ENCODE measurements at regions of chr20 and their contacts with region 1.

Region 1: DNA sequence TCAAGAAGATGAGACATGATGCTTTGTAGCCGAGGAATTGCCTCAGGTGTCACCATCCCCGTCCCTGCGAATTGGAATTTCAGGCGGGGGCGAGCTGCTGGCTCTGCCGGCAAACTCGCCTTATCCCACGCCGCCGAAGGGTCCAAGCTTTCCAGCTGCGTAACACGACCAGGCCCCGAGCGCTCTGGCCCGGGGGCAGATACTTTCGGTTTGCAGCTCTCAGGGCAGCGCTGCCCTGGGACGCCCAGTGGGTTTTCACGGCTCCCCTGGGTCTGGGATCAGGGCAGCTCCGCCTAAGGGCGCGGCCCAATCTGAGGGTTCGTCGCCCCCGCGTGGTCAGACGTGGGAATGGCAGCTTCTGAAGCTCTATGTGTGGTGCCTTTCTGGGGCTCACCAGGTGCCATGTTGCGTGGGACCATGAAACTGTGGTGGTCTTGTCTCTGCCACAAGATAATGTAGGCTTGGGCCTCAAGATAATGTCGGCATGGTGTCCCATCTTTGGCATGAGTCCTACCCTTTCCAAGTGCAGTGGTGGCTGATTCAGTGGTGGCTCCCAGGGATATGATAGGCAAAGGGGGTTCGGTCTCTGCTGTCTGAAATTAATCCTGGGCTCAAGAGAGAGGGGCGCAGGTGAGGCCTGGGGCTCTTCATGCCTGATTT is 20.9 kb downstream of the PIGT start:
- DNase-seq: peak; percentile 93
- H3K4me3 ChIP-seq: peak overlapping the region; percentile 47 to 80 (median 52)
- H3K27ac ChIP-seq: peak overlapping the region; percentile 78 to 86 (median 80)
- H3K4me1 ChIP-seq: peaks cover 0 to 13% (median 9%) of the 10 kb centered on the region in 4 donors
- H3K27me3 ChIP-seq: no peaks in the 10 kb centered on the region
- CTCF ChIP-seq: peak; percentile 92 to 98 (median 96)
- EP300 ChIP-seq: no peak
- POLR2A ChIP-seq: peak; percentile 38

Region 2: GRCh38 chr20:45311589-45312211 is 125.2 kb before region 1 on chr20:
- in situ Hi-C with region 1: loop called (anchors 5 to 25 kb)
- intact Hi-C with region 1: loop called (anchors 5 kb)
- DNase-seq: peak; percentile 68
- H3K4me3 ChIP-seq: no peak overlapping the region
- H3K27ac ChIP-seq: no peak overlapping the region
- H3K4me1 ChIP-seq: peaks cover 0 to 13% (median 4%) of the 10 kb centered on the region in 4 donors
- H3K27me3 ChIP-seq: peaks cover 62% of the 10 kb centered on the region
- CTCF ChIP-seq: peak; percentile 65 to 86 (median 75)
- EP300 ChIP-seq: no peak
- POLR2A ChIP-seq: no peak

Region 3: DNA sequence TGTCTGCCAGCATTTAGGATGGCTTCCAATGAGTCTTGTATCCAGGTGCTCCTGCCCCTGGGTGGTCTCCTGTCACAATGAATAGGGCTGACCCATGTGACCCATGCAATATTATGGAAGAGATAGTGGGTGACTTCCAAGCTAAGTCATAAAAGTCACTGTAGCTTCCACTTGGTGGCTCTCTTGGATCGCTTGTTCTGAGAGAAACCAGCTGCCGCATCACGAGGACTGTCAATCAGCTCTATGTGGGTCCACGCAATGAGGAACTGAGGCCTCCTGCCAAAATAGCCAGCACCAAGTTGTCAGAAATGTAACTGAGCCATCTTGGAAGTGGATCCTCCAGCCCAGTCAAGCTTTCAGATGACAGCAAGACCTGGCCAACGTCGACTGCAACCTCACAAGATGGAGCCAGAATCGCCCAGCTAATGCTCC is 113.9 kb before region 1 on chr20:
- in situ Hi-C with region 1: loop called (anchors 5 to 25 kb)
- intact Hi-C with region 1: loop called (anchors 5 kb)
- DNase-seq: peak; percentile 60
- H3K4me3 ChIP-seq: no peak overlapping the region
- H3K27ac ChIP-seq: peak overlapping the region; percentile 22 to 67 (median 37)
- H3K4me1 ChIP-seq: peaks cover 5 to 35% (median 24%) of the 10 kb centered on the region in 4 donors
- H3K27me3 ChIP-seq: no peaks in the 10 kb centered on the region
- CTCF ChIP-seq: peak in 2 of 5 experiments; percentile 23 to 43
- EP300 ChIP-seq: no peak
- POLR2A ChIP-seq: no peak

Region 4: GRCh38 chr20:45470262-45470931 is 33.5 kb after region 1 on chr20:
- in situ Hi-C with region 1: no loop called
- intact Hi-C with region 1: no loop called
- DNase-seq: peak; percentile 68
- H3K4me3 ChIP-seq: peak overlapping the region; percentile 27 to 52 (median 45)
- H3K27ac ChIP-seq: peak overlapping the region; percentile 78 to 85 (median 82)
- H3K4me1 ChIP-seq: peaks cover 19 to 37% (median 33%) of the 10 kb centered on the region in 4 donors
- H3K27me3 ChIP-seq: peaks cover 18% of the 10 kb centered on the region
- CTCF ChIP-seq: no peak
- EP300 ChIP-seq: no peak
- POLR2A ChIP-seq: peak; percentile 67